ENCODE measurements at regions of chr19 and their contacts with region 1.

Region 1: GRCh38 chr19:48608798-48609263 is 2.3 kb downstream of the SPACA4 start:
- DNase-seq: peak in 26 of 35 experiments; percentile 30 to 73 (median 49)
- ATAC-seq: peak; percentile 76 to 89 (median 83)
- H3K4me3 ChIP-seq: no peak overlapping the region
- H3K4me3 Mint-ChIP-seq: no peak overlapping the region
- H3K27ac ChIP-seq: no peak overlapping the region
- H3K27ac Mint-ChIP-seq: peak overlapping the region; percentile 34 to 69
- H3K4me1 ChIP-seq: peaks cover 0 to 10% of the 10 kb centered on the region in 2 experiments
- H3K4me1 Mint-ChIP-seq: peaks cover 4 to 7% (median 5%) of the 10 kb centered on the region in 3 donors
- H3K27me3 ChIP-seq: no peaks in the 10 kb centered on the region
- H3K27me3 Mint-ChIP-seq: no peaks in the 10 kb centered on the region

Region 2: DNA sequence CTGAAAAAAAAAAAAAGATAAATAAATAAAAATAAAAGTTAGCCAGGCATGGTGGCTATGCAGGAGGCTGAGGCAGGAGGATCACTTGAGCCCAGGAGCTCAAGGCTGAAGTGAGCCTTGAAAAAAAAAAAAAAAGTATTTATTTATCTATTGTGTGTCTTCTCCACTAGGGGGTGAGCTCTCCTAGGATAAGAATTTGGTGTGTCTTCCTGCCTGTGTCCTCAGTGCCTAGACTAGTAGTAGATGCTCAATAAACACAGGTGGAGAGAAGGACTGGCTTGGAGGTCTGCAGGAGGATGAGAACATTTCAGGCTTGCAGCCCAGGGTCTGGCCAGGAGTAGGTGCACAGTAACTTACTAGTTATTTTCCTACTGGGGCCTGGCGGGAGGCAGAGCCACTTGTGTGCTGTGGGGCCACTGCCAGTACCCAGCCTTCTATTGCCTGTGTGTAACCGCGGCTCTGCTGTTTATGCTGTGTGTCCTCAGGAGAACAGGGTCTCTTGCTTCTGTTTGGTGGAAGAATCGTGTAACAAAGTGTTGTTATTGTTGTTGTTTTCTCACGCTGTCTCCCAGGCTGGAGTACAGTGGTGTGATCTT is 102.6 kb before region 1 on chr19:
- CTCF ChIA-PET with region 1: interaction called in 1 of 2 experiments, 11 read pairs
- POLR2A ChIA-PET with region 1: no interaction called
- DNase-seq: peak in 3 of 35 experiments; percentile 20 to 69 (median 38)
- ATAC-seq: peak in 1 of 4 experiments; percentile 18
- H3K4me3 ChIP-seq: no peak overlapping the region
- H3K4me3 Mint-ChIP-seq: no peak overlapping the region
- H3K27ac ChIP-seq: no peak overlapping the region
- H3K27ac Mint-ChIP-seq: peak overlapping the region in 1 of 2 donors; percentile 39
- H3K4me1 ChIP-seq: peaks cover 8 to 29% of the 10 kb centered on the region in 2 experiments
- H3K4me1 Mint-ChIP-seq: peaks cover 12 to 26% (median 25%) of the 10 kb centered on the region in 3 donors
- H3K27me3 ChIP-seq: peaks cover 0 to 4% of the 10 kb centered on the region in 2 experiments
- H3K27me3 Mint-ChIP-seq: no peaks in the 10 kb centered on the region

Region 3: GRCh38 chr19:48568345-48568886 is 40.4 kb before region 1 on chr19:
- CTCF ChIA-PET with region 1: no interaction called
- POLR2A ChIA-PET with region 1: no interaction called
- DNase-seq: no peak
- ATAC-seq: no peak
- H3K4me3 ChIP-seq: no peak overlapping the region
- H3K4me3 Mint-ChIP-seq: no peak overlapping the region
- H3K27ac ChIP-seq: no peak overlapping the region
- H3K27ac Mint-ChIP-seq: no peak overlapping the region
- H3K4me1 ChIP-seq: no peaks in the 10 kb centered on the region
- H3K4me1 Mint-ChIP-seq: peaks cover 0 to 2% (median 2%) of the 10 kb centered on the region in 3 donors
- H3K27me3 ChIP-seq: peaks cover 0 to 7% of the 10 kb centered on the region in 2 experiments
- H3K27me3 Mint-ChIP-seq: peaks cover 6 to 9% of the 10 kb centered on the region in 2 donors

Region 4: DNA sequence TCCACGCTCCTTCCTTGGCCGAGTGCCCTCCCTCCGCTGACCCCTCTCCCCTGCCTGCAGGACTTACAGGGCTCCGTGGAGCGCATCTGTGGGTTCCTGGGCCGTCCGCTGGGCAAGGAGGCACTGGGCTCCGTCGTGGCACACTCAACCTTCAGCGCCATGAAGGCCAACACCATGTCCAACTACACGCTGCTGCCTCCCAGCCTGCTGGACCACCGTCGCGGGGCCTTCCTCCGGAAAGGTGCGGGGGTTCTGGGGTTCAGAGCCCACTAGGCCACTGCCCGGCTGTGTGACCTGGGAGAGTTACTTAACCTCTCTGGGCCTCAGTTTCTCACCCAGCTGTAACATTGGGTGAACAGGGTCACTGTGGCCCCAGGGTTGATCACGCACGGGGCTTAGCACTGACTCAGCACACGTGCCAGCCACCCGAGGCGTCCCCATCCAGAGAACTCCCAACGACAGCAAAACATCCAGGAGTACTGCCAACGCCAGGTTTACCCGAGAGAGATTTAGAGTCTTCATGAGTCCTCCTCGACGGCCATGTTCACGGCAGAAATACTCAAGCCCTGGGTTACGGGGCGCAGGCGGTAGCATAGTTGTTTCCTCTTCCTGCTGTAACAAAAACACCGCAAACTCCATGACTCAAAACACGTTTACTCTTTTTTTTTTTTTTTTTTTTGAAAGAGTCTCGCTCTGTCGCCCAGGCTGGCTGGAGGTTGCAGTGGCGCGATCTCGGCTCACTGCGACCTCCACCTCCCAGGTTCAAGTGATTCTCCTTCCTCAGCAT is 12.0 kb before region 1 on chr19:
- CTCF ChIA-PET with region 1: interaction called in 1 of 2 experiments, 11 read pairs
- POLR2A ChIA-PET with region 1: no interaction called
- DNase-seq: peak in 28 of 35 experiments; percentile 25 to 74 (median 40)
- ATAC-seq: peak; percentile 74 to 89 (median 83)
- H3K4me3 ChIP-seq: peak overlapping the region in 1 of 2 donors; percentile 44
- H3K4me3 Mint-ChIP-seq: peak overlapping the region; percentile 51 to 75 (median 70)
- H3K27ac ChIP-seq: peak overlapping the region; percentile 75
- H3K27ac Mint-ChIP-seq: peak overlapping the region; percentile 86 to 88
- H3K4me1 ChIP-seq: peaks cover 0 to 28% of the 10 kb centered on the region in 2 experiments
- H3K4me1 Mint-ChIP-seq: peaks cover 0 to 24% (median 9%) of the 10 kb centered on the region in 3 donors
- H3K27me3 ChIP-seq: peaks cover 0 to 20% of the 10 kb centered on the region in 2 experiments
- H3K27me3 Mint-ChIP-seq: no peaks in the 10 kb centered on the region